IMR-90 (cell line): ENCODE measurements at regions of chr1 and their contacts with region 1.

Region 1: DNA sequence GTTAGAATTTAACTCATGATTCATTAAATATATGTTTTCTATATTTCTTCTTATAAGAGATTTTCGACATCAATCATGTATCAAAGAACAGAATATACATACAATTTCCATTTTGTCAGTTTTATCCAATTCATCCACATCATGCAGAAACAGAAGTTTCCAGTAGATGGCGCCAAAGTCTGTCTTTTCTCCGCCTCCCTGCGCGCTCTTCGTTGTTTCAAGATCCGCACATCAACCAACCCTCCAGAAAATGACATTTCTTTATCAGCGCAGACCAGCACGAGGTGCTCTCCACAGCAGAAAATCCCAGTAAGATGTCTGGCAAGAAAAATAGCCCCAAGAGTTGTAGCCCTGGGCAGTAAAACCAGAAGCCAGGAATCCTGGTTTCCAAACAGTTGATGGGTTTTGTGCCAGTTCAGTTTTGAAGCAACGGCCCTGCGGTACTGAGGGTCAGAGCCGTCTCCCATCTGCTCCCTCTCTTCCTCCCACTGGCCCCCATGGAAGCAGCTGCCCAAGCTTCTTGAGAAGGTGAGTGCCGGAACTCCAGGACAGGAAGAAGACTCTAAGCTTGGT is 38.6 kb upstream of the GPR137B start:
- DNase-seq: peak; percentile 57
- ATAC-seq: peak; percentile 79
- H3K4me3 ChIP-seq: no peak overlapping the region
- H3K27ac ChIP-seq: no peak overlapping the region
- H3K4me1 ChIP-seq: peaks cover 2% of the 10 kb centered on the region; the same call in 1 of the 2 replicates
- H3K27me3 ChIP-seq: peaks cover 7% of the 10 kb centered on the region
- CTCF ChIP-seq: peak; percentile 88
- POLR2A ChIP-seq: no peak
- RAD21 ChIP-seq: peak; percentile 91

Region 2: GRCh38 chr1:236156512-236157208 is 52.9 kb after region 1 on chr1:
- CTCF ChIA-PET with region 1: no interaction called
- POLR2A ChIA-PET with region 1: no interaction called
- dilution Hi-C with region 1: no loop called
- in situ Hi-C with region 1: no loop called
- intact Hi-C with region 1: no loop called
- DNase-seq: no peak
- ATAC-seq: no peak
- H3K4me3 ChIP-seq: no peak overlapping the region
- H3K27ac ChIP-seq: no peak overlapping the region
- H3K4me1 ChIP-seq: no peaks in the 10 kb centered on the region
- H3K27me3 ChIP-seq: no peaks in the 10 kb centered on the region
- CTCF ChIP-seq: no peak
- POLR2A ChIP-seq: no peak
- RAD21 ChIP-seq: no peak

Region 3: DNA sequence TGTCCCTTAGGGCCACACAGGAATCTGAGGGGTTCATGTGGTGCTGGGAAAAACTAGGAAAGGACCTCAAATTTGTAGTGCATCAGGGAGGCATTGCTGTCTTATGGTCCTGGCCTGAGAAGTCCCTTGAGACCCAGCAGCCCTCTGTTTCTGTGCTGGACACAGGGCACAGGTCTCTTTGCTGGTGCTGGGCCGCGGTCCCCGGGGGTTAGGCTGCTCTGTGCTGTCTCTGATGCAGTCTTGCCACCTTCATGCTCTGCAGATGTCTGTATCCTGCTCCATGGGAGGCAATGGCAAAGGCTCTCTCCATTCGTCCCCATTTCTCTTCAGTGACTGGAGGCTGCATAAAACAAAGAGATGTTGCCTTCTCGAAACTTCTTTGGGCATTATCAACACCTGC is 303.3 kb after region 1 on chr1:
- CTCF ChIA-PET with region 1: no interaction called
- POLR2A ChIA-PET with region 1: no interaction called
- dilution Hi-C with region 1: no loop called
- in situ Hi-C with region 1: no loop called
- intact Hi-C with region 1: no loop called
- DNase-seq: no peak
- ATAC-seq: no peak
- H3K4me3 ChIP-seq: no peak overlapping the region
- H3K27ac ChIP-seq: no peak overlapping the region
- H3K4me1 ChIP-seq: no peaks in the 10 kb centered on the region
- H3K27me3 ChIP-seq: no peaks in the 10 kb centered on the region
- CTCF ChIP-seq: no peak
- POLR2A ChIP-seq: no peak
- RAD21 ChIP-seq: no peak

Region 4: DNA sequence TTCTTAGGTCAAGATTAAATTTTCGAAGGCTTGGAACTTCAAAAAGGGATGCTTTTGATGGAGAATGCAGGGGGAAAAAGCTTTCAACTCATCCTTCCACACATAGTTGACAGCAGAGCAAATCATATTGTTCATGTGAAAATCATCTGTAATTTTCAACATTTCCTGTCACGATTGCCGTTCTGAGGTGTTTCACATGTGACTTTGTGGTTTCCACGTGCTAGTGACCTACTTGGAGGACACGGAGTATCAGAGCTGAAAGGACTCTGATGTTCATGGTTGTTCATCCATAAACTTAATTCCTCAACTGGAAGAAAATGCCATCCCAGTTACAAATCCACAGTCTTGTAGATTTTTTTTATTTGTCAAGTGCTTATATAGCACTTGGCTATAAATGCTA is 1707.9 kb after region 1 on chr1:
- CTCF ChIA-PET with region 1: no interaction called
- POLR2A ChIA-PET with region 1: no interaction called
- dilution Hi-C with region 1: no loop called
- in situ Hi-C with region 1: no loop called
- intact Hi-C with region 1: loop called (anchors 5 kb)
- DNase-seq: no peak
- ATAC-seq: no peak
- H3K4me3 ChIP-seq: no peak overlapping the region
- H3K27ac ChIP-seq: no peak overlapping the region
- H3K4me1 ChIP-seq: no peaks in the 10 kb centered on the region
- H3K27me3 ChIP-seq: no peaks in the 10 kb centered on the region
- CTCF ChIP-seq: no peak
- POLR2A ChIP-seq: no peak
- RAD21 ChIP-seq: no peak